IMR-90 (cell line): ENCODE measurements at regions of chr4 and their contacts with region 1.

Region 1: GRCh38 chr4:48085821-48086607 is 48.0 kb downstream of the TXK start:
- DNase-seq: no peak
- ATAC-seq: no peak
- H3K4me3 ChIP-seq: no peak overlapping the region
- H3K27ac ChIP-seq: no peak overlapping the region
- H3K4me1 ChIP-seq: no peaks in the 10 kb centered on the region
- H3K27me3 ChIP-seq: peaks cover 6% of the 10 kb centered on the region
- CTCF ChIP-seq: no peak
- POLR2A ChIP-seq: no peak
- RAD21 ChIP-seq: no peak

Region 2: GRCh38 chr4:47668810-47669408 is 417.1 kb before region 1 on chr4:
- CTCF ChIA-PET with region 1: no interaction called
- POLR2A ChIA-PET with region 1: no interaction called
- dilution Hi-C with region 1: no loop called
- in situ Hi-C with region 1: no loop called
- intact Hi-C with region 1: loop called (anchors 5 kb)
- DNase-seq: peak; percentile 65
- ATAC-seq: peak; percentile 87
- H3K4me3 ChIP-seq: no peak overlapping the region
- H3K27ac ChIP-seq: no peak overlapping the region
- H3K4me1 ChIP-seq: no peaks in the 10 kb centered on the region
- H3K27me3 ChIP-seq: peaks cover 5% of the 10 kb centered on the region
- CTCF ChIP-seq: peak; percentile 68
- POLR2A ChIP-seq: no peak
- RAD21 ChIP-seq: peak; percentile 63

Region 3: GRCh38 chr4:47704693-47705325 is 381.2 kb before region 1 on chr4:
- CTCF ChIA-PET with region 1: no interaction called
- POLR2A ChIA-PET with region 1: no interaction called
- dilution Hi-C with region 1: no loop called
- in situ Hi-C with region 1: no loop called
- intact Hi-C with region 1: loop called (anchors 1 kb)
- DNase-seq: peak; percentile 37
- ATAC-seq: peak; percentile 93
- H3K4me3 ChIP-seq: no peak overlapping the region
- H3K27ac ChIP-seq: no peak overlapping the region
- H3K4me1 ChIP-seq: no peaks in the 10 kb centered on the region
- H3K27me3 ChIP-seq: peaks cover 9% of the 10 kb centered on the region
- CTCF ChIP-seq: peak; percentile 58
- POLR2A ChIP-seq: no peak
- RAD21 ChIP-seq: peak; percentile 69

Region 4: GRCh38 chr4:47762376-47763266 is 323.4 kb before region 1 on chr4:
- CTCF ChIA-PET with region 1: no interaction called
- POLR2A ChIA-PET with region 1: no interaction called
- dilution Hi-C with region 1: no loop called
- in situ Hi-C with region 1: no loop called
- intact Hi-C with region 1: no loop called
- DNase-seq: no peak
- ATAC-seq: no peak
- H3K4me3 ChIP-seq: no peak overlapping the region
- H3K27ac ChIP-seq: no peak overlapping the region
- H3K4me1 ChIP-seq: no peaks in the 10 kb centered on the region
- H3K27me3 ChIP-seq: peaks cover 1% of the 10 kb centered on the region; the same call in 1 of the 2 replicates
- CTCF ChIP-seq: no peak
- POLR2A ChIP-seq: no peak
- RAD21 ChIP-seq: no peak

Region 5: GRCh38 chr4:47926639-47927258 is 159.3 kb before region 1 on chr4:
- CTCF ChIA-PET with region 1: no interaction called
- POLR2A ChIA-PET with region 1: no interaction called
- dilution Hi-C with region 1: no loop called
- in situ Hi-C with region 1: no loop called
- intact Hi-C with region 1: loop called (anchors 5 kb)
- DNase-seq: peak; percentile 47
- ATAC-seq: peak; percentile 96
- H3K4me3 ChIP-seq: no peak overlapping the region
- H3K27ac ChIP-seq: no peak overlapping the region
- H3K4me1 ChIP-seq: no peaks in the 10 kb centered on the region
- H3K27me3 ChIP-seq: no peaks in the 10 kb centered on the region; the same call in 1 of the 2 replicates
- CTCF ChIP-seq: peak; percentile 54
- POLR2A ChIP-seq: no peak
- RAD21 ChIP-seq: peak; percentile 32; the same call in 1 of the 2 replicates

Region 6: DNA sequence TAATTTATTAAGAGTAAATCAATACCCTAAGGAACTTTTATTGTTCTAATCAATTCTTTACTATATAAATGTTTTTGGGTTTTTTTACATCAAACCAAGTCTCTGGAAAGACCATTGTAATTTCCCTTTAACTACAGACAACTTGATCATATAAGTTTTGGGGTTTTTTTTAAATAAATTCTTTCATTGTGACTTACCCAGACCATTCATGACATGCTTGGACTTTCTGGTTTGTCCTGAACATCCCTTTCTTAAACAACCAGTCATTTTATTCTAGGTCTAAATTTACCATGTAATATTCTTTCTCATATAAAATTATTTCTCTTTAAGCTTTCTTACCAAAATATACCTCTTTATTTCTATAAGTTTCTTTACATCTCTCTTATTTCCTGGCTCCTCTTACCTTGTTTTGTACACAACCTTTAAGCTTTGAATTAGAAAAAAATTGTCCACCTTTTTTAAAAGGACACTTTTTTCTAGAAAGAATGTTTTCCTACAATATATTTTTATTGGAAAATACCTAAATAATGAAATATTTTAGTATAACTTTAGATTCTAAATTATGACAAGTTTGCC is 77.9 kb before region 1 on chr4:
- CTCF ChIA-PET with region 1: no interaction called
- POLR2A ChIA-PET with region 1: no interaction called
- dilution Hi-C with region 1: no loop called
- in situ Hi-C with region 1: no loop called
- intact Hi-C with region 1: loop called (anchors 1 kb)
- DNase-seq: no peak
- ATAC-seq: no peak
- H3K4me3 ChIP-seq: no peak overlapping the region
- H3K27ac ChIP-seq: no peak overlapping the region
- H3K4me1 ChIP-seq: no peaks in the 10 kb centered on the region
- H3K27me3 ChIP-seq: no peaks in the 10 kb centered on the region
- CTCF ChIP-seq: no peak
- POLR2A ChIP-seq: no peak
- RAD21 ChIP-seq: no peak

Region 7: GRCh38 chr4:48016141-48017103 is 69.6 kb before region 1 on chr4 and contains the starts of genes CNGA1 and NIPAL1:
- CTCF ChIA-PET with region 1: interaction called, 3 read pairs
- POLR2A ChIA-PET with region 1: no interaction called
- dilution Hi-C with region 1: no loop called
- in situ Hi-C with region 1: no loop called
- intact Hi-C with region 1: loop called (anchors 5 kb)
- DNase-seq: peak; percentile 23
- ATAC-seq: peak; percentile 97
- H3K4me3 ChIP-seq: peak within 1 kb of the TSS; percentile 44
- H3K27ac ChIP-seq: no peak within 1 kb of the TSS
- H3K4me1 ChIP-seq: no peaks in the 10 kb centered on the region
- H3K27me3 ChIP-seq: peaks cover 12% of the 10 kb centered on the region
- CTCF ChIP-seq: peak; percentile 28
- POLR2A ChIP-seq: no peak
- RAD21 ChIP-seq: 0 out of 2 replicates have a peak, but pooled peaks have one; percentile 8
- total RNA-seq, gene CNGA1: not detected in 2 replicates
- total RNA-seq, gene NIPAL1: 1.1 TPM in 2 replicates